Activated naive CD4-positive, alpha-beta T cell treated with anti-CD3 and anti-CD28 coated beads for 36 hours (primary cell): ENCODE measurements at regions of chr19 and their contacts with region 1.

Region 1: GRCh38 chr19:52570000-52570861 is at the start of gene ZNF701:
- DNase-seq: peak; percentile 97
- H3K4me3 Mint-ChIP-seq: peak within 1 kb of the TSS; percentile 92
- H3K27ac Mint-ChIP-seq: peak within 1 kb of the TSS; percentile 93
- H3K4me1 Mint-ChIP-seq: peaks cover 31% of the 10 kb centered on the region
- H3K27me3 Mint-ChIP-seq: no peaks in the 10 kb centered on the region
- total RNA-seq, gene ZNF701: 13.8 to 15.0 TPM

Region 2: GRCh38 chr19:52453324-52454094 is 116.7 kb before region 1 on chr19 and contains the start of gene ZNF578:
- CTCF ChIA-PET with region 1: no interaction called
- intact Hi-C with region 1: no loop called
- DNase-seq: peak; percentile 87
- H3K4me3 Mint-ChIP-seq: peak within 1 kb of the TSS; percentile 74
- H3K27ac Mint-ChIP-seq: no peak within 1 kb of the TSS
- H3K4me1 Mint-ChIP-seq: peaks cover 15% of the 10 kb centered on the region
- H3K27me3 Mint-ChIP-seq: peaks cover 2% of the 10 kb centered on the region
- total RNA-seq, gene ZNF578: 0.32 to 0.36 TPM

Region 3: DNA sequence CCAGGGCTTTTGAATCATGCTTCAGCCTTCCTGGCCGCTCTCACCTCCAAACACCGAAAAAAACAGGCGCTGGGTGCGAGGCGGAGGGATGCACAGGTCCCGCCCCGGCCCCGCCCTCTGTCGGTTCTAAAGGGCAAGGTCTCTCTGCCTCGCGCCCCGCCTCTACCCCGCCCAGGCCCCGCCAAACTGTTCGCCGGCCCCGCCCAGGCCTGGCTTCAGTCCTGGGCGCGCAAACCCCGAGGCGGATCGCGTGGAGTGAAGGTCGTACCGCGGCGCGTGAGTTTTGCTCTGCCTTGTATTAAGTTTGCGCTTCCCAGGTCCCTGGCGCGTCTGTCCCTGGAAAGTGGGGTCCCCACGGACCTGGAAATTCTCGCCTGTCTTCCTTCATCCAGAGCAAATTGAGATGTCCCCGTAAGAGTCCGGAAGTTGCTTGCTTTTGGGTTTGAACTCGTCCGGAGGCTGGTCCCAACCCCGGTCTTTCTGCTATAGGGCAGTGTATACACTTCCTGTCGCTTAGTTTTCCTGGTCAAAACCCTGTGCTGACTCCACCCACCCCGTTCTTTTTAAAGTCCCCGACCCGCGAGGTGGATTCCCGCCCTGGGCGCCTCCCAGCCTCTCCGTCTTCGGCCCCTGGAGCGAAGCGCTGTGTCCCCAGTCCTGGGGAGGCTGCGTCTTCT is 34.3 kb before region 1 on chr19:
- CTCF ChIA-PET with region 1: no interaction called
- intact Hi-C with region 1: loop called (anchors 1 kb)
- DNase-seq: peak; percentile 94
- H3K4me3 Mint-ChIP-seq: peak overlapping the region; percentile 85
- H3K27ac Mint-ChIP-seq: peak overlapping the region; percentile 92
- H3K4me1 Mint-ChIP-seq: peaks cover 26% of the 10 kb centered on the region
- H3K27me3 Mint-ChIP-seq: no peaks in the 10 kb centered on the region

Region 4: DNA sequence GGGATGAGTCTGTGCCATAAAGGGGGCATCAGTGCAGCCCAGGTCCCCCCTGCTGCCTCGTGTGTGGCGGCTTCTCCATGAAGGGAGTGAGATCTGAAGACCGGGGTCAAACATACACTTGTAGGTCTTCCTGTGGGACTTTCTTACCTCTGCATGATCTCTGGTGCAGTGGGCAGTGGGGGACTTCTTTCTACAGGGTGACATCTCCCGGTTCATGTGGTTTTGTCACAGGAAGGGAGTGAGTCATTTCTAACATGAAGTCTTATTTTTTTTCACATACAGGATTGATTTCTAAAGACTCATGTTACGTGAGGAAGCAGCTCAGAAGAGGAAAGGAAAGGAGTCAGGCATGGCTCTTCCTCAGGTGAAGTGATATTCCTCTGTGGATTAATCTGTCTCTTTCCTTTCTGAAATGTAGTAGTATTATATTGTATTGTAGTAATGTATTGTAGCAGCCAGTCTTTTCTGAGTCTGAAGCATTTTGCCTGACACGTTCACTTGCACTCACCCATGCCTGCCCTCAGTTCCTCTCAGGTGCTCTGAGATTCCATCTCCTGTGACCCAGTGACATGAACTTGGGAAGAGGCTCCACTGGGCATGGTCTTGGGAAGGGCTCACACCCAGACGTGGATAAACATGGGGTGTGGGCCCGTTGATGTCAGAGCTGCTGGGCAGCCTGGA is 27.1 kb before region 1 on chr19:
- CTCF ChIA-PET with region 1: no interaction called
- intact Hi-C with region 1: loop called (anchors 1 kb)
- DNase-seq: peak; percentile 64
- H3K4me3 Mint-ChIP-seq: no peak overlapping the region
- H3K27ac Mint-ChIP-seq: peak overlapping the region; percentile 46
- H3K4me1 Mint-ChIP-seq: peaks cover 18% of the 10 kb centered on the region
- H3K27me3 Mint-ChIP-seq: no peaks in the 10 kb centered on the region

Region 5: DNA sequence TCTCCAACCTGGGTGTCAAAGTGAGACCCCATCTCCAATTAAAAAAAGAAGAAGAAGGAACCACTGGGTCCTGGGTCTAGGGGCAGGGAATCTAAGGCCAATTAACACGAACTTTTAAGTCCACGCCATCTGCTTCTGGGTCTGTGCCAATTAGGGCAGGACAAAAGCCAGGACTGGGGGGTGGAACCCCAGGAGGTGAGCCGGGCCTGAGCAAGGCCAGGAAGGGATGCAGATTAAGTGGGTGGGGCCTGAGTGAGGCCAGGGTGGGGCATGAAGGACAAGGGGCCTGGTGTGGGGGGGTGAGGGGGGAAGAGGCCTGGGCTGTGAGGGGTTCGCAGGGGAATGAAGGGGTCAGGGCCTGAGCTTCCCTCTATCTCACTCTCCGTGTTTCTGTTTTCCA is 94.2 kb after region 1 on chr19:
- CTCF ChIA-PET with region 1: no interaction called
- intact Hi-C with region 1: no loop called
- DNase-seq: no peak
- H3K4me3 Mint-ChIP-seq: no peak overlapping the region
- H3K27ac Mint-ChIP-seq: no peak overlapping the region
- H3K4me1 Mint-ChIP-seq: peaks cover 2% of the 10 kb centered on the region
- H3K27me3 Mint-ChIP-seq: no peaks in the 10 kb centered on the region

Region 6: GRCh38 chr19:52695996-52696395 is 125.8 kb after region 1 on chr19:
- CTCF ChIA-PET with region 1: no interaction called
- intact Hi-C with region 1: no loop called
- DNase-seq: no peak
- H3K4me3 Mint-ChIP-seq: no peak overlapping the region
- H3K27ac Mint-ChIP-seq: no peak overlapping the region
- H3K4me1 Mint-ChIP-seq: peaks cover 1% of the 10 kb centered on the region
- H3K27me3 Mint-ChIP-seq: no peaks in the 10 kb centered on the region